ENCODE measurements at regions of chr16 and their contacts with region 1.

Region 1: DNA sequence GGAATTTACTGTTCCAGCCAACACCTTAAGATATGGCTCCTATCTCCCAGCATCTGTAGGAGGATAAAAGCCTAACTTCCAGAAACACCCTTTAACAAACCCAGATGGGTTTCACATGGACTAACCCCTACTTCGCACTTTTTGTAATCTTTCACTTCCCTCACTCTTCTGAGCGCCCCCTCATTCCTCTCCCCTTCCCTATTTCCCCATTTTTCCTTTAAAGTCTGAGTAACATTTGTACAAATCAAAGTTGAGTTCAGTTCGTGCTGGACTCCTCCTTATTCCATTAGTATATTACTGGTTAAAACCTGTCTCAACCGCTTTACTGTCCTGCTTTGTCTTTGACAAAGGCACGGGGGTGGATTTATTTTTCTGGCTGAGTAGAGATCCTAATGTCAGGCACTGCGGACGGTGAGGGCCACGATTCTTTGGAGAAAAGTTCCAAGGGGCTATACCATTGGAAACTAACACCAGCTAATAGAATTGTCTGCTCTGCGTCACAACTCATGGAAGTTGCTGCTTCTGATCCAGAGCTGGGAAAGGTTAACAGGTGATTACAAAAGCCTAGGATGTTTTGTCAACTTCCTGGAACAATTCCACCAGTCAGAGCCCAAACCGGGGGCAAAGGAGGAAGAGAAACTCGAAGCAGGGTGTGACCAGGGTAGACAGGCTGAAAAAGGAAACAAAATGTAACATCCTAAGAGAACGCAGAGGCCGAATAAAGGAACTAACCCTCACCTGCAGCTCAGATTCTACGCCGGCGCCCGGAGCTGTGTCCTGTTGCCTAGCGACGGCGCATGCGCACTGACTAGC is 12.5 kb downstream of the TAT start:
- DNase-seq: no peak
- H3K4me3 Mint-ChIP-seq: peak overlapping the region; percentile 85
- H3K27ac Mint-ChIP-seq: peak overlapping the region; percentile 88
- H3K4me1 Mint-ChIP-seq: peaks cover 18% of the 10 kb centered on the region
- H3K27me3 Mint-ChIP-seq: peaks cover 2% of the 10 kb centered on the region

Region 2: DNA sequence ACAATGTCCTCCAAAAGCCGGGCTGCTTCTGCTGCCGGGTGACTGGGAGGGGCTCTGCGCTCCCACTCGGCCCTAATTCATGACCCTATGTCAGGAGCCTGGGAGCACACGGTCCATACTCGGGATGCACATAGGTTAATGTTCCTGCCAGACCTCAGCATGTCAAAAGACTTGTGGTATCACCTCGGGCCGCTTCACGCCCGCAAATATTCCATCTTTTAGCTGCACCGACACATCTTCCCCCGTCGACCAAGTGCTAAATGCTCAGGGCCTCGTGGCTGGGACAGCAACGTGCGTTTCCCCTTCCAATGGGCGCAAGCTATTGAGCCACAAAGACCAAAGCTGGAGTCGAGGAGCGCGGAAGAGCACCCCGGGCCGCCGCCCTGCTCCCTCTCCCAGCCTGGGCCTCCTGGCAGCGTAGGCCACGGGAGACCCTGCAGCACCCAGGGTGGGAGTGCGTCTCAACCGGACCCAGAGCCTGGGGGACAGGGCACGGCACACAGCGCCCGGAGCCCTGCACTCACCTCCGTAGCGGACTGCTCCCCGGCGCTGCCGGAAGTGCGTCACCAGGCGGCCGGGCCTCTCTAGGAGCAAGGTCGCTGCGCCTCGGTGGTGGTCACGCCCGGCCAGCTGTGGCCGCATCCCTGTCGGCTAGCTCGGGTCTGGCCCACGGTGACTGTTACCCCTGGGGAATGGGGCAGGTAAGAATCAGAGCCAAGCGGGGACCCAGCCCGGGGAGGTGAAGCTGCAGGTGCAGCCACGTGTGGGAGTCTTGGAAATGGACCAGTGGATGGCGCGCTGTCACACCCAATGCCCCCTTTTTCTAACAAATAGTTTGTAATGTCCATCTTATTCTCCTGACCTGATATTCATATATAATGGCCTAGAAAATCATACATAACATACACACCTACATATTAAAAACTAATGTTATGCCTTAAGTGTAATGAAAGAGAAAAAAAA is 102.4 kb before region 1 on chr16 and contains the start of gene ZNF23:
- intact Hi-C with region 1: loop called (anchors 1 kb)
- DNase-seq: peak; percentile 71
- H3K4me3 Mint-ChIP-seq: peak within 1 kb of the TSS; percentile 86
- H3K27ac Mint-ChIP-seq: peak within 1 kb of the TSS; percentile 86
- H3K4me1 Mint-ChIP-seq: peaks cover 13% of the 10 kb centered on the region
- H3K27me3 Mint-ChIP-seq: peaks cover 1% of the 10 kb centered on the region
- total RNA-seq, gene ZNF23: 4.9 and 6.4 TPM in 2 replicates

Region 3: DNA sequence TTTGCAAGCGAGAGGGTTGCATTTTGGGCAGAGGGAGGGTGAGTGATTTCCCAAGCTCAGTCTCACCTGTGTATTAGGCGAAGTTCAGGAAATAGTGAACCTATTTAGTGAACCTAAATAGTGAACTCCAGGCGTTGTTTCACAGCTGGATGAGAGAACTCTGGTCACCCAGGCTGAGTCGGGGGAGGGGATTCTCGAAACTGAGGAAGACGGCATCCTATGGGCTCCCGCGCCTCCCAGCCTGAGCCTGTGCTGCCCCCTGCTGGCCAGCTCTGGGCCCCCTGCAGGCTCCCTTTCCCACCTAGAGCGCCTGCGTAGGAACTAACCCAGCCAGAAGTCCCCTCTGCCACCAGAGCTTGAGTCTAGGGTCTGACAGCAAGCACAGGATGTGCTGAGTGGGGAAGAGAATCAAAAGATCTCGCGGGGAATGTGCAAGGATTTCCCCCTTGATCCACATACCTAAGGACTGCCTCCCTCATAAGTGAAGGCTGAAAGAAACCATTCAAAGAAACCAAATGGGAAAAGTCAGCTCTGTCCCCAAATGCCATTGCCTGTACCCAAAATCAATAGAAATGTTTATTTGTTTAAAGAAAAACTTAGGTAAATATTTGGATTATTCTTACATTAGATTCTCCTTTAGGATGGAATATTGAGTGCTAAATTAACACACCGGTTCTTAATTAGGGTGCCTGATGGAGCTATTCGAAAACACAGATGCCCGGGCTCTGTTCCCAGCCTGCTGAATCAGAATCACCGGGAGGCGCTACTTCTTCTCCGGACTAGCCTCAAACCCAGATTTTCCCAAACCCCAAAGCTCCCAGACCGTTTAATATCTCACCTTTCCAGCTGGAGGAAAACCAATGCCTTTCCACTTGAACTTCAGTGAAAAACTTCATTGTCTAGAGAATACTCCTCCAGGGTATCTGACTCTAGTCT is 46.8 kb after region 1 on chr16:
- intact Hi-C with region 1: loop called (anchors 1 kb)
- DNase-seq: peak; percentile 59
- H3K4me3 Mint-ChIP-seq: no peak overlapping the region
- H3K27ac Mint-ChIP-seq: no peak overlapping the region
- H3K4me1 Mint-ChIP-seq: no peaks in the 10 kb centered on the region
- H3K27me3 Mint-ChIP-seq: peaks cover 29% of the 10 kb centered on the region

Region 4: GRCh38 chr16:71883849-71884638 is 319.7 kb after region 1 on chr16 and contains the start of gene ZNF821:
- intact Hi-C with region 1: loop called (anchors 10 kb)
- DNase-seq: peak; percentile 61
- H3K4me3 Mint-ChIP-seq: peak within 1 kb of the TSS; percentile 96
- H3K27ac Mint-ChIP-seq: peak within 1 kb of the TSS; percentile 94
- H3K4me1 Mint-ChIP-seq: peaks cover 54% of the 10 kb centered on the region
- H3K27me3 Mint-ChIP-seq: peaks cover 16% of the 10 kb centered on the region
- total RNA-seq, gene ZNF821: 6.4 and 7.4 TPM in 2 replicates

Region 5: DNA sequence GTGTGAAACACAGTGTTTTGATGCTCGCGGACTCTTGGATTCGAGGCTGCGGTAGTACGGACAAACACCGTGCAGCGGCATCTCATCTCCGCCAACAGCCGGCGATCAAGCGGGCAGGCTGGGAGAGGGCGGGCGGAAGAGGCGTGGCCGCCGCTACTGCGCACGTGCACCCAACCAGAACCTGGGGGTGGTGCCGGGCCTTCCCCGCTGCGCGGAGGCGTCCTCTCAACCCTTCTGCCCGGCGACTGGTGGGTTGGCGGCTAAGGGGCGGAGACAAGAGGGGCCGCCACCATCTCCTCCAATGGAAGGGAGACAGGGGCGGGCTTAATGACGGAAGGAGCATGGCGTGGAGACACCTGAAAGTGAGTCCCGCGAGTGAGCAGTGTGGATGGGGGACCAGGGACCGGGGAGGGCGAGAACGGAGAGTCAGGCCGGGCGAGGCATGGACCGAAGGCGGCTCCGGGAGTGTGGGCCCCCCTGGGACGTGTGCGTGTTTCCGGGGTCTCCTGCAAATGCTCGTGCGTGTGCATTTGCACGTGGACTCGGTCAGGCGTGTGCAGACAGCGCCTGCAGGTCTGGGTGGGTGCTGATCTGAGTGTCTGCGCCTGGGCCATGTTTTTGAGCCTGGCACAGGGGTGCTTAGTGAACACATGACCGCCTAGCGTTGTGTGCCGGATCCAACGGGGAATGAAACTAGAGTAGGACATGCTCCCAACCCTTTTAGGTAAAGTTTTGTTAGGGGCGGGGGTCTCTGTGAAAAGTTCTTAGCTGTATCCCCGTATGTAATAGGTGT is 444.3 kb after region 1 on chr16 and contains the start of gene DHODH:
- intact Hi-C with region 1: loop called (anchors 1 kb)
- DNase-seq: peak; percentile 98
- H3K4me3 Mint-ChIP-seq: peak within 1 kb of the TSS; percentile 99
- H3K27ac Mint-ChIP-seq: peak within 1 kb of the TSS; percentile 99
- H3K4me1 Mint-ChIP-seq: peaks cover 16% of the 10 kb centered on the region
- H3K27me3 Mint-ChIP-seq: no peaks in the 10 kb centered on the region
- total RNA-seq, gene DHODH: 31.0 and 33.1 TPM in 2 replicates

Measured in activated T-helper 1 cell treated with anti-CD3 and anti-CD28 coated beads, Interleukin-12 subunit alpha, Interleukin-12 subunit beta, Interleukin-2, Interleukin-4 antibody, amounts not matched to agents 30 ng/mL and 10 ng/mL and 1 ng/mL, durations not matched to agents 14 hours and 24 hours and 36 hours (primary cell).